Upper lobe of right lung (tissue), 1 donor: ENCODE measurements at regions of chrX and their contacts with region 1.

Region 1: GRCh38 chrX:37926700-37927099 is 79.3 kb upstream of the DYNLT3 start:
- DNase-seq: no peak
- ATAC-seq: peak; percentile 53
- H3K4me3 ChIP-seq: no peak overlapping the region
- H3K27ac ChIP-seq: no peak overlapping the region
- H3K4me1 ChIP-seq: no peaks in the 10 kb centered on the region
- H3K27me3 ChIP-seq: no peaks in the 10 kb centered on the region
- CTCF ChIP-seq: peak; percentile 48

Region 2: DNA sequence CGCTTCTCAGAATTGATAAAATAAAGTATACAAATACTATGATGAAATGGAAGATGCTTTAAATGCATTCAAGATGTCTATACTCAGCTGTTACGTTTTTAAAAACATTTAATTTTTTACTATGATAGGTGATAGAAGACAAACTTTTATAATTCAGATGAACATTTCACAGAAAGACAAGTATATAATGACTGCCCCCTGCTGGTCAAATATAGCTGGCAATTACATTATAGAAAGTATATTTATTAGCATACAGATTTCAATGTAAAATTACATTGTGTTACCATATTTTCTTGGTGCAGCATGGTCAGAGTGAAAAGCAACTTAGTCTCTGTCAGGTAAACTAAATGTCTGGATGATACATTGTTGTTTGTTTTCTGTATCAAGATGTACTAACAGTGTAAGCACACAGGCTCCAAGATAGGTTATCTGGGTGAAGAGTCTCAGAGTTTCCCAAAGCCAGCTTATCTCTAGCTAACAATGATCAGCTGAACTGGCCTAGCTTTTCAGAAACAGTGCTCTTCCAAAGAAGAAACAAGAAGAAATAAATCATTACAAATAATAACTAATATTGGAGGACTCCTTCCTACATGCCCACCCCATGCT is 239.9 kb after region 1 on chrX:
- intact Hi-C with region 1: loop called (anchors 10 kb)
- DNase-seq: no peak
- ATAC-seq: no peak
- H3K4me3 ChIP-seq: no peak overlapping the region
- H3K27ac ChIP-seq: no peak overlapping the region
- H3K4me1 ChIP-seq: no peaks in the 10 kb centered on the region
- H3K27me3 ChIP-seq: no peaks in the 10 kb centered on the region
- CTCF ChIP-seq: peak; percentile 66